Naive thymus-derived CD4-positive, alpha-beta T cell (primary cell): ENCODE measurements at regions of chr11 and their contacts with region 1.

Region 1: GRCh38 chr11:103601225-103601846 is 435.1 kb upstream of the DDI1 start:
- DNase-seq: peak in 2 of 9 donors; percentile 1 to 3
- ATAC-seq: peak; percentile 70
- H3K4me3 ChIP-seq: no peak overlapping the region
- H3K4me3 Mint-ChIP-seq: no peak overlapping the region
- H3K27ac ChIP-seq: no peak overlapping the region
- H3K27ac Mint-ChIP-seq: no peak overlapping the region
- H3K4me1 ChIP-seq: no peaks in the 10 kb centered on the region
- H3K4me1 Mint-ChIP-seq: no peaks in the 10 kb centered on the region
- H3K27me3 ChIP-seq: no peaks in the 10 kb centered on the region
- H3K27me3 Mint-ChIP-seq: peaks cover 5 to 10% (median 8%) of the 10 kb centered on the region in 5 donors

Region 2: GRCh38 chr11:103108933-103109817 is 492.2 kb before region 1 on chr11 and contains the start of gene DYNC2H1:
- CTCF ChIA-PET with region 1: no interaction called
- POLR2A ChIA-PET with region 1: no interaction called
- intact Hi-C with region 1: loop called in 1 of 2 experiments (anchors 10 kb)
- DNase-seq: peak; percentile 78 to 91 (median 89)
- ATAC-seq: peak; percentile 99
- H3K4me3 ChIP-seq: peak within 1 kb of the TSS; percentile 93
- H3K4me3 Mint-ChIP-seq: peak within 1 kb of the TSS; percentile 87 to 99 (median 94)
- H3K27ac ChIP-seq: peak within 1 kb of the TSS; percentile 60
- H3K27ac Mint-ChIP-seq: peak within 1 kb of the TSS; percentile 87 to 99 (median 92)
- H3K4me1 ChIP-seq: peaks cover 4 to 6% of the 10 kb centered on the region in 2 donors
- H3K4me1 Mint-ChIP-seq: peaks cover 5 to 19% (median 13%) of the 10 kb centered on the region in 7 donors
- H3K27me3 ChIP-seq: no peaks in the 10 kb centered on the region
- H3K27me3 Mint-ChIP-seq: peaks cover 6 to 42% (median 7%) of the 10 kb centered on the region in 5 donors
- total RNA-seq, gene DYNC2H1: 1.5 to 4.2 (median 3.0) TPM

Region 3: DNA sequence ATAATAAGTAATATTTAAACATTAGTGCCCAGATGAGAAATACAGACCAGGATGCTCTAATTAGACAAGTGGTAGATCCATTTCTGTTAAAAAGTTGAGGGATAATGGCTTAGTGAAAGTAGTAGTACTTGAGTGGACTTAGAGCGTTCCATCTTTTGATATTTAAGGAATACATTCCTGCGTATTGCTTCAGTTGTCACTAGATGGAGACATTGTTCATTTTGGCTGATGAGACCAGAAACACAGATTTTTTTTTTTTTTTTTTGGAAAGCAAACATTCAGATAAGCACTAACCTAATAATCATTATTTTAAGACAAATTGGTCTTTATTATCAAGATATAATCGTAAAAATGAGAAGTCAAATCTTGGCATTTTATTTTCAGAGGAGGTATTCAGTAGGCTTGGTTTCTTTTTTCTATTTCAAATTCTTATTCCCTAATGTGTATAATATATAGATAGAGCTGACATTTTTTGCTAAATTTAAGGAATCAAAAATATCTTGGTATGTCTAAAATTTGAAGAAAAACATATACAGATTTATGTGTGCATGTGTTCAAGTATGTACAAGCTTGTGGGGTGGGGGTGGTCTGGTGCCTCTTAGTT is 399.2 kb before region 1 on chr11:
- CTCF ChIA-PET with region 1: no interaction called
- POLR2A ChIA-PET with region 1: no interaction called
- intact Hi-C with region 1: loop called (anchors 2 to 10 kb)
- DNase-seq: no peak
- ATAC-seq: no peak
- H3K4me3 ChIP-seq: no peak overlapping the region
- H3K4me3 Mint-ChIP-seq: no peak overlapping the region
- H3K27ac ChIP-seq: no peak overlapping the region
- H3K27ac Mint-ChIP-seq: no peak overlapping the region
- H3K4me1 ChIP-seq: no peaks in the 10 kb centered on the region
- H3K4me1 Mint-ChIP-seq: no peaks in the 10 kb centered on the region
- H3K27me3 ChIP-seq: no peaks in the 10 kb centered on the region
- H3K27me3 Mint-ChIP-seq: no peaks in the 10 kb centered on the region

Region 4: DNA sequence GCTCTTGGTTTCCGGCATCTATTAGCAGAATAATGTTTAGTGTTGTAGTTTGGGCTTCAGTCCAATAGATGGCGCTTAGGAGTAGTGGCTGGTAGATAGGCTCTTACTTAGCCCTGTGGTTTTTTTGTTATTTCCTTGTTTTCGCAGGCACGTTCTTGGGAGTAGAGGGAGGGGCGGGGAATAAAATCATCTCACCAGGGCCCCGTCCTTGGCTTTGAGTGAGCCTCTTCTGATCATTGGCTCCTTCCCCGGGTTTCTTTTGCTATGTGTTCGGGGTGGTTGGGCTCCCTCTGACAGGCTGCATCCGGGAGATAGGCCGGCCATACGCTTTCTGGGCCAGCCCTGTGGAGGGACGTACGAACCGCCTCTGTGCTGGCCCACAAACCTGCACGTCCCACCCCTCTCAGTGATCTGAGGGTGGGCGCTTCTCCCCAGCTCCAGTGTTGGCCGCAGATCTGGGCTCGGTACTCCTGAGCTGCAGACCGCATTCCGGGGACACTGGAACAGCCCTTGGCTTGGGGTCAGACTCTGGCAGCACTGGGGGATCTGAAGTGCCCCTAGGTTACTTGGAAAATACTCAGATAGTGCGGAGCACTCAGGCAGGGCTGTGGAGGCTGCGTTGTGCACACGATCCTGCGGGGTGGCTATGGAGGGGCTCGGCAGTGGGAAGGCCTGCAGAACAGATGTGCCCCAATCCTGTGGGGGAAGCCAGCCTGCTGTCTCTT is 275.1 kb before region 1 on chr11:
- CTCF ChIA-PET with region 1: no interaction called
- POLR2A ChIA-PET with region 1: no interaction called
- intact Hi-C with region 1: loop called in 1 of 2 experiments (anchors 1 kb)
- DNase-seq: peak in 4 of 9 donors; percentile 10 to 25 (median 18)
- ATAC-seq: peak; percentile 90
- H3K4me3 ChIP-seq: no peak overlapping the region
- H3K4me3 Mint-ChIP-seq: peak overlapping the region in 2 of 10 donors; percentile 16 to 23
- H3K27ac ChIP-seq: no peak overlapping the region
- H3K27ac Mint-ChIP-seq: no peak overlapping the region
- H3K4me1 ChIP-seq: no peaks in the 10 kb centered on the region
- H3K4me1 Mint-ChIP-seq: peaks cover 0 to 8% (median 7%) of the 10 kb centered on the region in 7 donors
- H3K27me3 ChIP-seq: no peaks in the 10 kb centered on the region
- H3K27me3 Mint-ChIP-seq: peaks cover 4 to 12% (median 5%) of the 10 kb centered on the region in 5 donors

Region 5: GRCh38 chr11:103566116-103566515 is 35.2 kb before region 1 on chr11:
- CTCF ChIA-PET with region 1: no interaction called
- POLR2A ChIA-PET with region 1: no interaction called
- intact Hi-C with region 1: no loop called
- DNase-seq: no peak
- ATAC-seq: no peak
- H3K4me3 ChIP-seq: no peak overlapping the region
- H3K4me3 Mint-ChIP-seq: no peak overlapping the region
- H3K27ac ChIP-seq: no peak overlapping the region
- H3K27ac Mint-ChIP-seq: no peak overlapping the region
- H3K4me1 ChIP-seq: no peaks in the 10 kb centered on the region
- H3K4me1 Mint-ChIP-seq: no peaks in the 10 kb centered on the region
- H3K27me3 ChIP-seq: no peaks in the 10 kb centered on the region
- H3K27me3 Mint-ChIP-seq: peaks cover 0 to 14% (median 0%) of the 10 kb centered on the region in 5 donors

Region 6: DNA sequence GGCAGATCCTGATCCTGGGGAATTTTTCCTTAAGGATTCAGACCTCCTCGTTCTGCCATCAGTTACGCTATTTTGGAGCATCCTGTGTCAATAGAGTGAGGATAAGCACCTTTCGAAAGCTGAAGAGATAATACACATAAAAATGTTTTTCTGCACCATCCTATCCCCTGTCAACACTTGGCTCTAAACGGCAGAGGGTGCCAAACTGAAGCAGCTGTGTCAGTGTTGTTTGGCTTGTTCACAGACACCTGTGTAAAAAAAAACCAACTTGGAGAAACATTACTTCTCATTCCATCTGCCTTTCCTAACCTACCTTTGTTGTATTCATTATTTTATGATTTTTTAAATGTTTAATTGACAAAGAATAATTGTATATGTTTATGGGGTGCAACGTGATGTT is 18.1 kb after region 1 on chr11:
- CTCF ChIA-PET with region 1: no interaction called
- POLR2A ChIA-PET with region 1: no interaction called
- intact Hi-C with region 1: no loop called
- DNase-seq: no peak
- ATAC-seq: no peak
- H3K4me3 ChIP-seq: no peak overlapping the region
- H3K4me3 Mint-ChIP-seq: no peak overlapping the region
- H3K27ac ChIP-seq: no peak overlapping the region
- H3K27ac Mint-ChIP-seq: no peak overlapping the region
- H3K4me1 ChIP-seq: no peaks in the 10 kb centered on the region
- H3K4me1 Mint-ChIP-seq: no peaks in the 10 kb centered on the region
- H3K27me3 ChIP-seq: no peaks in the 10 kb centered on the region
- H3K27me3 Mint-ChIP-seq: peaks cover 0 to 10% (median 5%) of the 10 kb centered on the region in 5 donors

Region 7: DNA sequence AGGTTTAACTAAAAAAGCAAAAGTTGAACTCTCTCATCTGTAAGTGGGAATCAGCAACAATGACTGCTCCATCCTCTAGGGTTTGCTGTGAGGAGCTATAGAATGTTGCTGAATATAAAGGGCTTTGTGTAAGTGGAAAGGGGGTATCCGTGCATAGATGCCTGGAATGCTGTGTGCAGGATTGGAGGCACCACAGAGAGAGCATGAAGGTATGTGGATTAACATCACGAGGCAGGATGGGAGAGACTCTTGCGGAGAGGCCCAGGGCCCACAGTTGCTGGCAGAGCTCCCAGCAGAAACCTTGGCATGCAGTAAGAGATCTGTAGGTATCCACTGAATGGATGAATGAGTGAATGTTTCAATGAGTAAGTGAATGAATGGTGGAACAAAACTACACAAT is 136.4 kb after region 1 on chr11:
- CTCF ChIA-PET with region 1: no interaction called
- POLR2A ChIA-PET with region 1: no interaction called
- intact Hi-C with region 1: no loop called
- DNase-seq: no peak
- ATAC-seq: no peak
- H3K4me3 ChIP-seq: no peak overlapping the region
- H3K4me3 Mint-ChIP-seq: peak overlapping the region in 3 of 10 donors; percentile 5 to 18 (median 11)
- H3K27ac ChIP-seq: no peak overlapping the region
- H3K27ac Mint-ChIP-seq: peak overlapping the region in 5 of 9 donors; percentile 10 to 89 (median 73)
- H3K4me1 ChIP-seq: no peaks in the 10 kb centered on the region
- H3K4me1 Mint-ChIP-seq: peaks cover 0 to 27% (median 12%) of the 10 kb centered on the region in 7 donors
- H3K27me3 ChIP-seq: no peaks in the 10 kb centered on the region
- H3K27me3 Mint-ChIP-seq: no peaks in the 10 kb centered on the region